Thyroid gland (tissue), 4 donors: ENCODE measurements at regions of chr4 and their contacts with region 1.

Region 1: DNA sequence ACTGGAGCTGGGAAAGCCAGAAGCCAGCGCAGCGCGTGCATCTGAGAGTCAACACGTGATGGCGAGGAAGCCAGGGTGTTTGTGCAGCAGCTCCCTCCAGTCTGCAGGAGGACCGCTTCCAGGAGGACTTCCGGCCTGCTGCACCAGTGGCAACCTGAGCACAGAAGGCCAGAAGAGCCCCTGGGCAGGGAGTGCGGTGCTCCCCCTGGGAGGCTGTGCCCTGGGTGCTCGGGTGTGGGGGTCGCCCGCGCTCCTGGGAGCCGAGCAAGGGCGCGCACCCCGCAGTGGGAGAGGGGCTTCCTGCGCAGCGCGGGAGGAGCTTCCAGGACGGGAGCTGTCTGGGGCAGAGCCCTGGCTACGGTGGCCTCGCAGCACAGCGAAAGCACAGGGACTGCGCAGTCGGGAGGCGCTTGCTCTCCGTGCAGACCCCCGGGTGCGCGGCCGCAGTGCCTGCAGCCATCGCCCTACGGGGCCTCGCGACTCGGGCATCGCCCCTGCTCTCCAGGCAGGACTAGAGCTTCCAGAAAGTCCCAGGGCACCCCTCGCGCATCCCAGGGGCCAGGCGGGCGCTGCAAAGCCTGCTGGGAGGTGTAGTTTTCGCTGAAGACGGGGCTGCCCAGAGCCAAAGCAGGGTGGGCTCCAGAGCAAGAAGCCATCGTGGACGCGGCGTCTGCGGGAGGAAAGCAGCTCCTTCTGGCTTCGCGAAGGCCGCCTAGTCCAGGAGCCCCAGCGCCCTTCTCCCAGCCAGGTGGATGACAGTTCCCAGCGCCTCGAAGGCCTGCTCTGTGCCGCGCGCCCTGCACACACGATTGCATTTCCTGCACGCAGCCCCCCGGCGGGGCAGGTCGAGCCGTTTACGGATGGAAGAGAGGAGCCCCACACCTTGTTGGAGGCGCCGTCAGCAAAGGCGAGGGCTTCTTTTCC is 24.1 kb upstream of the WFS1 start:
- DNase-seq: peak; percentile 19 to 20
- H3K4me3 ChIP-seq: peak overlapping the region in 1 of 3 donors; percentile 10
- H3K27ac ChIP-seq: no peak overlapping the region
- H3K4me1 ChIP-seq: peaks cover 5 to 8% of the 10 kb centered on the region in 2 donors
- H3K27me3 ChIP-seq: no peaks in the 10 kb centered on the region
- CTCF ChIP-seq: no peak
- POLR2A ChIP-seq: no peak

Region 2: GRCh38 chr4:5708449-5709206 is 536.9 kb before region 1 on chr4 and contains the start of gene EVC2:
- intact Hi-C with region 1: no loop called
- DNase-seq: peak; percentile 79 to 80
- H3K4me3 ChIP-seq: peak within 1 kb of the TSS; percentile 59 to 79 (median 61)
- H3K27ac ChIP-seq: peak within 1 kb of the TSS; percentile 74 to 89 (median 82)
- H3K4me1 ChIP-seq: peaks cover 16 to 39% of the 10 kb centered on the region in 2 donors
- H3K27me3 ChIP-seq: no peaks in the 10 kb centered on the region
- CTCF ChIP-seq: peak in 1 of 6 experiments; percentile 13
- POLR2A ChIP-seq: peak in 1 of 2 donors; percentile 75
- total RNA-seq, gene EVC2: 15.7 to 24.5 (median 17.2) TPM

Region 3: GRCh38 chr4:5998333-5998936 is 247.1 kb before region 1 on chr4:
- intact Hi-C with region 1: loop called (anchors 10 kb)
- DNase-seq: peak; percentile 73 to 74
- H3K4me3 ChIP-seq: no peak overlapping the region
- H3K27ac ChIP-seq: no peak overlapping the region
- H3K4me1 ChIP-seq: no peaks in the 10 kb centered on the region
- H3K27me3 ChIP-seq: no peaks in the 10 kb centered on the region
- CTCF ChIP-seq: peak; percentile 83 to 95 (median 90)
- POLR2A ChIP-seq: no peak